ENCODE measurements at regions of chr2 and their contacts with region 1.

Region 1: GRCh38 chr2:96333708-96334107 is 1.9 kb upstream of the NCAPH start:
- DNase-seq: no peak
- ATAC-seq: no peak
- H3K4me3 ChIP-seq: no peak overlapping the region
- H3K27ac ChIP-seq: no peak overlapping the region
- H3K4me1 ChIP-seq: peaks cover 19% of the 10 kb centered on the region; the same call in 1 of the 2 replicates
- H3K27me3 ChIP-seq: no peaks in the 10 kb centered on the region
- CTCF ChIP-seq: no peak

Region 2: GRCh38 chr2:96414161-96414710 is 80.5 kb after region 1 on chr2:
- CTCF ChIA-PET with region 1: no interaction called
- POLR2A ChIA-PET with region 1: interaction called, 10 read pairs
- in situ Hi-C with region 1: no loop called
- intact Hi-C with region 1: no loop called
- DNase-seq: no peak
- ATAC-seq: no peak
- H3K4me3 ChIP-seq: no peak overlapping the region
- H3K27ac ChIP-seq: no peak overlapping the region
- H3K4me1 ChIP-seq: peaks cover 28% of the 10 kb centered on the region
- H3K27me3 ChIP-seq: no peaks in the 10 kb centered on the region
- CTCF ChIP-seq: peak; percentile 35

Region 3: GRCh38 chr2:96452053-96452452 is 118.3 kb after region 1 on chr2:
- CTCF ChIA-PET with region 1: no interaction called
- POLR2A ChIA-PET with region 1: no interaction called
- in situ Hi-C with region 1: no loop called
- intact Hi-C with region 1: no loop called
- DNase-seq: no peak
- ATAC-seq: no peak
- H3K4me3 ChIP-seq: no peak overlapping the region
- H3K27ac ChIP-seq: no peak overlapping the region
- H3K4me1 ChIP-seq: no peaks in the 10 kb centered on the region
- H3K27me3 ChIP-seq: no peaks in the 10 kb centered on the region
- CTCF ChIP-seq: no peak

Region 4: DNA sequence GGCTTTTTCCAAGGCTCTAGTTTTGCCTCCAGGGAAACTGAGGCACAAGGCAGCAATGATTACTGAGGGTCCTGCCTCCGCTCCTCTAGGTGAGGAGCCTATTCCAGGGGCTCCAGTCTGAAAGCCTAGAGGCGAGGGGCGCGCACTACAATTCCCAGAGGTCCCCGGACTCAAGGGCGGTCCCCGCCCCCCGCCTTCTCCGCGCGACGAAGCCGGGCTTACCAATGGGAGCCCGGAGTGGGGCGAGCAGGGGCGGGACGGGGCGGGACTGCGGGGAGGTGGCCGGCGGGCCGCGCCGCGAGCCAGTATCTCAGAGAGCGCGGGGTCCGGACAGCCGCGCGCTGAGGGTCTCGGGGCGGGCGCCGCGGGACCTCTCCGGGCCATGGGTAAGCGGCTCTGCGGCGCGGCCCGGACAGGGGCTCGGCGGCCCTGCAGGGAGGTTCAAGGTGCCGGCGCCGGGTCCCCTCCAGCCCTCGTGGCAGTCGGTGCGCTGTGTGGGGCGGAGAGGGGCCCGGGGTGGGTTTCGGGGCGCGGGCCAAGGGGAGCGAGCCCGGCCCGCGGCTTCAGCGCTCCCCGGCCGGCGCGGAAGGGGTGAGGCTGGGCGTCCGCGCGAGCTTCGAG is 202.8 kb after region 1 on chr2 and contains the start of gene ARID5A:
- CTCF ChIA-PET with region 1: no interaction called
- POLR2A ChIA-PET with region 1: no interaction called
- in situ Hi-C with region 1: no loop called
- intact Hi-C with region 1: no loop called
- DNase-seq: no peak
- ATAC-seq: peak; percentile 91
- H3K4me3 ChIP-seq: peak within 1 kb of the TSS; percentile 57 to 67
- H3K27ac ChIP-seq: peak within 1 kb of the TSS; percentile 65
- H3K4me1 ChIP-seq: peaks cover 76% of the 10 kb centered on the region
- H3K27me3 ChIP-seq: no peaks in the 10 kb centered on the region
- CTCF ChIP-seq: no peak
- total RNA-seq, gene ARID5A: 19.3 TPM

Measured in Panc1 (cell line).